ENCODE measurements at regions of chr1 and their contacts with region 1.

Region 1: GRCh38 chr1:53959664-53960250 is 13.6 kb downstream of the LRRC42 start:
- DNase-seq: no peak
- ATAC-seq: no peak
- H3K4me3 ChIP-seq: no peak overlapping the region
- H3K27ac ChIP-seq: no peak overlapping the region
- H3K4me1 ChIP-seq: peaks cover 7% of the 10 kb centered on the region
- H3K27me3 ChIP-seq: no peaks in the 10 kb centered on the region

Region 2: GRCh38 chr1:53889304-53890298 is 70.2 kb before region 1 on chr1 and contains the start of gene YIPF1:
- intact Hi-C with region 1: loop called in 1 of 4 experiments (anchors 5 kb)
- DNase-seq: peak; percentile 93 to 97 (median 96)
- ATAC-seq: peak; percentile 99
- H3K4me3 ChIP-seq: peak within 1 kb of the TSS; percentile 97
- H3K27ac ChIP-seq: peak within 1 kb of the TSS; percentile 69
- H3K4me1 ChIP-seq: no peaks in the 10 kb centered on the region
- H3K27me3 ChIP-seq: no peaks in the 10 kb centered on the region
- total RNA-seq, gene YIPF1: 13.3 to 15.7 (median 15.6) TPM

Measured in right cardiac atrium (tissue), 5 donors.